AG04450 (cell line): ENCODE measurements at regions of chr7 and their contacts with region 1.

Region 1: DNA sequence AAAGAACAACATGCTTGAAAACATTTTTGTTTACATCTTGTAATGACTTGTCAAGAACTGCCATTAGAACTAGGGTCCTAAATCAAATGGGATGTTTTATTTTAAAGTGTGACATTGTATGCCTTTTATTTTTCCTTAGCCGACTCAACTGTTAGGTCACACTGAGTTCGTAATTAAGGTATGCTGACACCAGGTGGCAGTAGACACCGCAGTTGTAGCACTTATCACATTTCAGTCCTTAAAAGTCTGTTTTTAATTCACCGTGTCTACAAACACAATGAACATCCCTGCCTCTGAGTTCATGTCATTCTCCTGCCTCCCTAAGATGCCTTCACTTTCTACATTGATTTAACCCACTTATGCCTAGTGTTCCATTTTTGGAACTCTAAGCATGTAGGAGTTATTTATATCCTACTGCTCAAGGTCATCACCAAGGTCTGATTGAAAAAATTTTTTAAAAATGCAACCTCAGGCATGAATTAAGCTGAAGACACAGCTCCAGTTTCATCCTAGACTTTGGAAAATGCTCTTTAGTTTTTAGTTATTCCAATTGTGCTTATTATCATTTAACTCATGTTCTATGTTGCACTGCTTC is 186.1 kb downstream of the BMPER start:
- DNase-seq: peak; percentile 18
- H3K4me3 ChIP-seq: no peak overlapping the region
- H3K27ac ChIP-seq: no peak overlapping the region
- H3K27me3 ChIP-seq: no peaks in the 10 kb centered on the region
- CTCF ChIP-seq: peak; percentile 51

Region 2: GRCh38 chr7:33243319-33243881 is 848.0 kb before region 1 on chr7:
- CTCF ChIA-PET with region 1: interaction called, 13 read pairs
- POLR2A ChIA-PET with region 1: no interaction called
- DNase-seq: peak; percentile 27
- H3K4me3 ChIP-seq: no peak overlapping the region
- H3K27ac ChIP-seq: no peak overlapping the region
- H3K27me3 ChIP-seq: no peaks in the 10 kb centered on the region
- CTCF ChIP-seq: peak; percentile 77

Region 3: GRCh38 chr7:33650828-33651227 is 440.6 kb before region 1 on chr7:
- CTCF ChIA-PET with region 1: no interaction called
- POLR2A ChIA-PET with region 1: no interaction called
- DNase-seq: no peak
- H3K4me3 ChIP-seq: no peak overlapping the region
- H3K27ac ChIP-seq: no peak overlapping the region
- H3K27me3 ChIP-seq: no peaks in the 10 kb centered on the region
- CTCF ChIP-seq: no peak

Region 4: GRCh38 chr7:33904681-33905388 is 186.6 kb before region 1 on chr7:
- CTCF ChIA-PET with region 1: interaction called, 14 read pairs
- POLR2A ChIA-PET with region 1: no interaction called
- DNase-seq: no peak
- H3K4me3 ChIP-seq: peak overlapping the region; percentile 67
- H3K27ac ChIP-seq: no peak overlapping the region
- H3K27me3 ChIP-seq: no peaks in the 10 kb centered on the region
- CTCF ChIP-seq: peak; percentile 37

Region 5: GRCh38 chr7:34069630-34070270 is 21.7 kb before region 1 on chr7:
- CTCF ChIA-PET with region 1: interaction called, 19 read pairs
- POLR2A ChIA-PET with region 1: no interaction called
- DNase-seq: no peak
- H3K4me3 ChIP-seq: no peak overlapping the region
- H3K27ac ChIP-seq: no peak overlapping the region
- H3K27me3 ChIP-seq: no peaks in the 10 kb centered on the region
- CTCF ChIP-seq: no peak

Region 6: GRCh38 chr7:34165929-34166550 is 74.6 kb after region 1 on chr7:
- CTCF ChIA-PET with region 1: interaction called, 12 read pairs
- POLR2A ChIA-PET with region 1: no interaction called
- DNase-seq: no peak
- H3K4me3 ChIP-seq: no peak overlapping the region
- H3K27ac ChIP-seq: no peak overlapping the region
- H3K27me3 ChIP-seq: no peaks in the 10 kb centered on the region
- CTCF ChIP-seq: peak; percentile 84

Region 7: GRCh38 chr7:34247468-34247867 is 156.0 kb after region 1 on chr7:
- CTCF ChIA-PET with region 1: no interaction called
- POLR2A ChIA-PET with region 1: no interaction called
- DNase-seq: no peak
- H3K4me3 ChIP-seq: no peak overlapping the region
- H3K27ac ChIP-seq: no peak overlapping the region
- H3K27me3 ChIP-seq: no peaks in the 10 kb centered on the region
- CTCF ChIP-seq: no peak